Caco-2 (cell line): ENCODE measurements at regions of chr11 and their contacts with region 1.

Region 1: GRCh38 chr11:109697140-109697843 is 275.3 kb downstream of the C11orf87 start:
- DNase-seq: peak; percentile 41 to 61
- H3K4me3 ChIP-seq: no peak overlapping the region
- H3K4me3 Mint-ChIP-seq: no peak overlapping the region
- H3K27ac Mint-ChIP-seq: no peak overlapping the region
- H3K4me1 ChIP-seq: no peaks in the 10 kb centered on the region
- H3K4me1 Mint-ChIP-seq: no peaks in the 10 kb centered on the region
- H3K27me3 ChIP-seq: no peaks in the 10 kb centered on the region
- H3K27me3 Mint-ChIP-seq: no peaks in the 10 kb centered on the region
- CTCF ChIP-seq: peak; percentile 88 to 92

Region 2: GRCh38 chr11:108871152-108871551 is 826.1 kb before region 1 on chr11:
- CTCF ChIA-PET with region 1: no interaction called
- POLR2A ChIA-PET with region 1: no interaction called
- intact Hi-C with region 1: loop called (anchors 5 kb)
- DNase-seq: peak; percentile 55 to 64
- H3K4me3 ChIP-seq: no peak overlapping the region
- H3K4me3 Mint-ChIP-seq: no peak overlapping the region
- H3K27ac Mint-ChIP-seq: no peak overlapping the region
- H3K4me1 ChIP-seq: no peaks in the 10 kb centered on the region
- H3K4me1 Mint-ChIP-seq: no peaks in the 10 kb centered on the region
- H3K27me3 ChIP-seq: no peaks in the 10 kb centered on the region
- H3K27me3 Mint-ChIP-seq: no peaks in the 10 kb centered on the region
- CTCF ChIP-seq: peak; percentile 73 to 91

Region 3: GRCh38 chr11:109619498-109619897 is 77.8 kb before region 1 on chr11:
- CTCF ChIA-PET with region 1: no interaction called
- POLR2A ChIA-PET with region 1: no interaction called
- intact Hi-C with region 1: no loop called
- DNase-seq: no peak
- H3K4me3 ChIP-seq: no peak overlapping the region
- H3K4me3 Mint-ChIP-seq: no peak overlapping the region
- H3K27ac Mint-ChIP-seq: no peak overlapping the region
- H3K4me1 ChIP-seq: no peaks in the 10 kb centered on the region
- H3K4me1 Mint-ChIP-seq: no peaks in the 10 kb centered on the region
- H3K27me3 ChIP-seq: no peaks in the 10 kb centered on the region
- H3K27me3 Mint-ChIP-seq: peaks cover 8% of the 10 kb centered on the region
- CTCF ChIP-seq: no peak

Region 4: GRCh38 chr11:109769858-109770257 is 72.6 kb after region 1 on chr11:
- CTCF ChIA-PET with region 1: no interaction called
- POLR2A ChIA-PET with region 1: no interaction called
- intact Hi-C with region 1: no loop called
- DNase-seq: no peak
- H3K4me3 ChIP-seq: no peak overlapping the region
- H3K4me3 Mint-ChIP-seq: no peak overlapping the region
- H3K27ac Mint-ChIP-seq: no peak overlapping the region
- H3K4me1 ChIP-seq: no peaks in the 10 kb centered on the region
- H3K4me1 Mint-ChIP-seq: no peaks in the 10 kb centered on the region
- H3K27me3 ChIP-seq: no peaks in the 10 kb centered on the region; the same call in none of the 2 replicates
- H3K27me3 Mint-ChIP-seq: peaks cover 8% of the 10 kb centered on the region
- CTCF ChIP-seq: no peak